Cardiac septum (tissue), 1 donor: ENCODE measurements at regions of chr5 and their contacts with region 1.

Region 1: DNA sequence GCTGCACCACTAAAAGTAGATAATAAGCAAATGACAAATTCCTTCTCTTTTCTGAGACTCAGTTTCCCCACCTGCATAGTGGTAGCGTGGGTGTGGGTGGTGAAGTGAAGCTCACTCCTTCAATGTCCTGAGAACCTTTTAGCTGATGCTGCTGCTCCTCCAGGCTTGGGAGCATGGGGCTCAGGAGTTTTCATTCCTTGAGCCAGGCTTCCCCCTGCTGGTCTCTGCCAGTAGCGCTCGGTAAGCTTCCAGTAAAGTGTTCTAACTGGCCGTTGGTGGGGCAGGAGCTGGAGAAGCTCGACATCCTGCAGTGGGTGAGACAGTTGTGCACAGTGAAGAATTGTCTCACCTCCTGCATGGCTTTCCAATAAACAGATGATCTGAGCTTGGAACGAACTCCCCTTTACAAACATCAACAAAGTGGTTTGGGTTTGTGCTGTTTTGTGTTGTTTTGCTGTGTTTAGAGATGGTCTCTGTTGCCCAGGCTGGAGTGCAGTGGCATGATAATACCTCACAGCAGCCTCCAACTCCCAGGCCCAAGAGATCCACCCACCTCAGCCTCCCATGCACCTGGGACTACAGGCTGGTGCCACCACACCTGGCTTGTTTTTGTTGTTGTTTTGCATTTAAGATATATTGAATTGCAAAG is 34.6 kb downstream of the SPARC start:
- DNase-seq: peak; percentile 86

Region 2: DNA sequence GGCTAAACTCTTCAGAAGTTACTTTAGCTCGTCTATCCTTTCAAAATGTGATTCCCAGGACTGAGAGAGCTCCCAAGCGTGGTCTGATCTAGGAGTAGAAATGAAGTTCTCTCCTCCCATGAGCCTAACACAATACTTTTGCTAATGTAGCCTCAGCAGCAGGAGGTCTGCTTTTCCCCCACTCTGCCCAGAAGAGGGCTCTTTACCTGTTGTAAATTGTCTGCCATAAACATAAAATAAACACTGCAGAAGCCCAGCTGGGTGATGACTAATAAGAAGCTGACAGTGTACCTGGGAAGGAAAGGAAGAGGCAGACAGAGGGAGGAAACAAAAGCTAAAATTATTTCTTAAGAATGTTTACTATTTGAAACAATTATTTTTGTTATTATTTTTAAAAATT is 363.9 kb before region 1 on chr5:
- intact Hi-C with region 1: no loop called
- DNase-seq: no peak

Region 3: DNA sequence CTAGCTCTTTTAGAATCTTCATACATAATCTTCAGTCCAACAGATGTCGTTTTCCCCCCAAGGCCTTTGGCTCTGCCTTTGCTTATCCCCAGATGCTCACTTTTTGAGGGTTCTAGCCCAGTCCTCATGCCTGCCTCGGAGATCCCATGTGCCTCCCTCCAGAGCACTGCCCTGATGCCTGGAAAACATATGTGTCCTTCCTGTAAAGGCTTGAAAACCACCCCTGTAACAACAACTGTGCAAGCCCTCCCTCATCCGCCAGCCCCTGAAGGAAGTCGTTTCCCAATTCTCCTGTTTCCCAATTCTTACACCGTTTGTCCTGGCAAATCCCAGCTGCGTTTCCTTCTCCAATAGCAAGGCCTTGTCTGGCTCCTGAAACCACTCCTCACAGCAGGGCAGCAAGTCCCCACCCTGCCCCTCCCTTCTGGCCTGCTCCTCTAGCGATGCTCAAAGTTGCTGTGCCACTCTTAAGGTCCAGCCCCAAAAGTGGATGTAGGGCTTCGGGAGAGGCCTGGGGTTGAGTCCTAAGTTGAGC is 152.6 kb before region 1 on chr5:
- intact Hi-C with region 1: loop called (anchors 5 kb)
- DNase-seq: no peak

Region 4: GRCh38 chr5:151523335-151523734 is 128.8 kb before region 1 on chr5:
- intact Hi-C with region 1: loop called (anchors 5 kb)
- DNase-seq: no peak